ENCODE measurements at regions of chr1 and their contacts with region 1.

Region 1: GRCh38 chr1:230104395-230105244 is 37.6 kb downstream of the GALNT2 start:
- DNase-seq: peak; percentile 98 to 99
- H3K4me3 ChIP-seq: peak overlapping the region; percentile 45; the same call in 1 of the 2 replicates
- H3K27ac ChIP-seq: peak overlapping the region; percentile 98
- H3K4me1 ChIP-seq: peaks cover 58% of the 10 kb centered on the region
- H3K27me3 ChIP-seq: no peaks in the 10 kb centered on the region
- CTCF ChIP-seq: no peak

Region 2: DNA sequence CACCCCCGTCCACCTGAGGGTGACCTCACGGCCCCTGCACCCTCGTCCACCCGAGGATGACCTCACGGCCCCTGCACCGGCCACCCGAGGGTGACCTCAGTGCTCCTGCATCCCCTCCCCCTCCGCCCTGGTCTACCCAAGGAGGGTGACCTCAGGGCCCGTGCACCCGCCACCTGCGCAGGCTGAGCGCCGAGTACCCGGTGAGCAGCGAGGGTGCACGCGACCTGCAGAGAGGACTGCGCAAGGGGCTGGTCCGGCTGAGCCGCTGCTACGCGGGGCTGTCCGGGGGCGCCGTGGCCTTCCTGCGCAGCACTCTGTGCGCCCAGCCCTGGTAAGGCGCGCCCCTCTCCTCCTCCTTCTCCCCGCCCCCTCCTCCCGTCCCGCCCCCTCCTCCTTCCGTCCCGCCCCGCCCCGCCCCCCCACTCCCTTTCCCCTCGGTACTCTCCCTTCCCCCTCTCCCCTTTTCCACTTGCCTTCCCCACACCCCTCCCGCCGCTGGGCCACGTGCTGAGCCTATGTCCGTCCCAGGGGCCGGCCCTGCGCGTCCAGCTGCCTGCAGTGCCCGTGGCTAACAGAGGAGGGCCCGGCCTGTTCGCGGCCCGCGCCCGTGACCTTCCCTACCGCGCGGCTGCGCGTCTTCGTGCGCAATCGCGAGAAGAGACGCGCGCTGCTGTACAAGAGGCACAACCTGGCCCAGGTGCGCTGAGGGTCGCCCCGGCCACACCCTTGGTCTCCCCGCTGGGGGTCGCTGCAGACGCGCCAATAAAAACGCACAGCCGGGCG is 1726.3 kb before region 1 on chr1:
- CTCF ChIA-PET with region 1: no interaction called
- POLR2A ChIA-PET with region 1: no interaction called
- intact Hi-C with region 1: no loop called
- DNase-seq: peak; percentile 78 to 95
- H3K4me3 ChIP-seq: peak overlapping the region; percentile 67
- H3K27ac ChIP-seq: no peak overlapping the region
- H3K4me1 ChIP-seq: peaks cover 15% of the 10 kb centered on the region
- H3K27me3 ChIP-seq: no peaks in the 10 kb centered on the region
- CTCF ChIP-seq: peak; percentile 82

Region 3: DNA sequence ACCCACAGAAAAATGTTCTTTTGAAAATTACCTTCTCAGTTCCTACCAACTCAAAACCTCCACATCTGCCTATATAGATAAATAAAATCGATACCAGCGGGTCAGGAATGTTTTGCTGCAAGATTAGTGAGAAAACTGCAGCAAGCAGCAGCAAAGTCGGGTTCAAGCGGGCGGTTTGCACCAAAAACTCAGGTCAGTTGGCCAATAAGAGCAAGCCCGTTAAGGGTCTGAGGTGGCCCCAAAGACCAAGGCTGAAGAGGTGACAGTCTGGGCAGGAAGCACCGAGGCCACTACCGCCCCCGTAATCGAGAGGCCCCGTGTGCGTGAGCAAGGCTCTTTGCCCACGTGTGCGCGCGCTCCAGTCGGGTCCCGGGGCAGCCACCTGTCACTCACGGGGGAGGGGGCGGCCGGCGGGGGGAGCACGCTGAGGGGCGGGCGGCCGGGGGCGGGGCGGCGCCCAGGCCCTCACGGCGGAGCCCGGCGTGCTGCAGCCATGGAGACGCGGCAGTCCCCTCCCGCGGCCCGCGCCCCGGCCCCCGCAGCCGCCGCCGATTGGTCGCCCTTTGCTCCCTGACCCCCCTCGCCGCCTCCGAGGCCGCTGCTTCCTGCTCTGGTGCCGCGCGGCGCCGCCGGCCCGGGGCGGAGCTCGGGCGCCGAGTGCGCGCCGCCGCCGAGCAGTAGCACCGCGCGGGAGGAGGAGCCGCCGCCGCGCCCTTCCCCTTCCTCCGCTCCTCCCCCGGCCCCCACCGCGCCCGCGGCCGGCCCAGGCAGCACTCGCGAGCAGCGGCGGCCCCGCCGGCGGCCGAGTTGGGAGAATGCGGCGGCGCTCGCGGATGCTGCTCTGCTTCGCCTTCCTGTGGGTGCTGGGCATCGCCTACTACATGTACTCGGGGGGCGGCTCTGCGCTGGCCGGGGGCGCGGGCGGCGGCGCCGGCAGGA is 37.9 kb before region 1 on chr1 and contains the start of gene GALNT2:
- CTCF ChIA-PET with region 1: no interaction called
- POLR2A ChIA-PET with region 1: interaction called, 14 read pairs
- intact Hi-C with region 1: loop called (anchors 1 kb)
- DNase-seq: peak; percentile 63 to 92
- H3K4me3 ChIP-seq: peak within 1 kb of the TSS; percentile 93
- H3K27ac ChIP-seq: peak within 1 kb of the TSS; percentile 39
- H3K4me1 ChIP-seq: peaks cover 22% of the 10 kb centered on the region
- H3K27me3 ChIP-seq: no peaks in the 10 kb centered on the region
- CTCF ChIP-seq: no peak
- total RNA-seq, gene GALNT2: 104 and 121 TPM in 2 replicates

Region 4: DNA sequence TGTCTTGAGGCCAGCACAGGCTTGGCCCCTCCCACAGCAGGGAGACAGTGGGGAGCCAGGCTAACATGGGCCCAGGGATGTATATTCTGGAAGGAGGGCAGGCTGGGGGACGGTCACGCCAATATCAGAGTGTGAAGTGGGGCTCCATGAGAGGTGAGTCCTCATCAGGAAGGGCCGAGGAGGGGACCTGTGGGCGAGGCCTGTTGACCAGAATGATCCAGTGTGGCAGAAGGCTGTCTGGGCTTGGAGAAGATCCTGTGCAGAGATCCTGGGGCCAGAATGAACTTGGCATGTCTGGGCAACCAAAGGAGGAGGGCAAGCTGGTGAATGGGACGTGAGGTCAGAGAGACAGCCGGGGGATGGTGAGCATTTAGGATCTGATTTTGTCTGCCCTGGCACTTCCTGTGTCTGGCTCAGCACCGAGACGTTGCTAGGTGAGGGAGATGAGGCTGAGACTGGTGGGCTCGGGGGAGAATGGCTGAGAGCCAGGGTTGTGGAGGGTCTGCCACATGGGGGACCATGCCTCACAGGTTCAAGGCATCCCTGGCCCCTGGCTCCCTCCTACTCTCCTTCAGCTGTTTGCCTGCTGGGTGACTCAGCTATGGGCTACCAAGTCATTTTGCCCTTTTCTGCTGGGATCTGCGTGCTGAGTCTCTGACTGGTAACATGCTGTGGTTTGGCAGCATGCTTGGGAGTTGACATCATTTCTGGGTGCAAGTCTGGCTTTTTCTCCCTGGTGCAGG is 20.3 kb before region 1 on chr1:
- CTCF ChIA-PET with region 1: interaction called, 5 read pairs
- POLR2A ChIA-PET with region 1: interaction called, 7 read pairs
- intact Hi-C with region 1: loop called (anchors 1 kb)
- DNase-seq: peak; percentile 86 to 95
- H3K4me3 ChIP-seq: peak overlapping the region; percentile 4; the same call in 1 of the 2 replicates
- H3K27ac ChIP-seq: peak overlapping the region; percentile 85
- H3K4me1 ChIP-seq: peaks cover 48% of the 10 kb centered on the region
- H3K27me3 ChIP-seq: no peaks in the 10 kb centered on the region
- CTCF ChIP-seq: no peak

Region 5: DNA sequence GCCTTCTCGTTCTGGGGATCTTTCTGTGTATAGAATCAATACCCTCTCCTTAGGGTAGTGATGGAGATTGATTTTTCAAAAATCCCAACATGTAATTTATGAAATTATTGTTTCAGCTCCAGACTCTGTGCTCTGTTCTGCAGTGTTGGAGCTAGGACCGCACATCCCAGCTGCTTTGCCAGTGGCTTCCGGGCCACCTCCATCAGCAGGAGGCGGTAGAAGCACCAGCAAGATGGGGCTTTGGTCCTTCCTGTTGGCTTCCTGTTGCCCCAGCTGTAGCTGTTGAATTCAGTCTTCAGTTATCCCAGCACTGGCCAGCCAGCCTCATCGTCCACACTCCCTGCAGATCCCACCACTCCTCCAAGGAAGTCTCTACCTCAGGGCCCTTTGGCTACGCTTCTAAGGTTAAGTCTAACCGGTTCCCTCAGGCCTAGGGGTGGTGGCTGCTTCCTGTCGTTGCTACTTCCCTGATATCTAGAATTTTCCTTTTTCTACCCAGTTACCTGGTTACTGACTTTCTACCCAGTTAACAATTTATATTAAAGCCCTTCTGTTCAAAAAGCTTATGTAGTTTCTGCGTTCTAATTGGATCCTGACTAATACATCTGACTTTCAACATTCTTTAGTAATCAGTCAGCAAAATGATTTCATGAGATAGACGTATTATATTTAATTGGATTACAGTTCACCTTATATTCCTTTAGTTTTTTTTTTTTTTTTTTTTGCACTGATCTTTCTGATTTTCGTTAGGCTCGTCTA is 13.0 kb before region 1 on chr1:
- CTCF ChIA-PET with region 1: interaction called, 3 read pairs
- POLR2A ChIA-PET with region 1: interaction called, 3 read pairs
- intact Hi-C with region 1: loop called (anchors 1 kb)
- DNase-seq: peak; percentile 65 to 94
- H3K4me3 ChIP-seq: peak overlapping the region; percentile 27; the same call in 1 of the 2 replicates
- H3K27ac ChIP-seq: peak overlapping the region; percentile 94
- H3K4me1 ChIP-seq: peaks cover 55% of the 10 kb centered on the region
- H3K27me3 ChIP-seq: no peaks in the 10 kb centered on the region
- CTCF ChIP-seq: no peak

Region 6: DNA sequence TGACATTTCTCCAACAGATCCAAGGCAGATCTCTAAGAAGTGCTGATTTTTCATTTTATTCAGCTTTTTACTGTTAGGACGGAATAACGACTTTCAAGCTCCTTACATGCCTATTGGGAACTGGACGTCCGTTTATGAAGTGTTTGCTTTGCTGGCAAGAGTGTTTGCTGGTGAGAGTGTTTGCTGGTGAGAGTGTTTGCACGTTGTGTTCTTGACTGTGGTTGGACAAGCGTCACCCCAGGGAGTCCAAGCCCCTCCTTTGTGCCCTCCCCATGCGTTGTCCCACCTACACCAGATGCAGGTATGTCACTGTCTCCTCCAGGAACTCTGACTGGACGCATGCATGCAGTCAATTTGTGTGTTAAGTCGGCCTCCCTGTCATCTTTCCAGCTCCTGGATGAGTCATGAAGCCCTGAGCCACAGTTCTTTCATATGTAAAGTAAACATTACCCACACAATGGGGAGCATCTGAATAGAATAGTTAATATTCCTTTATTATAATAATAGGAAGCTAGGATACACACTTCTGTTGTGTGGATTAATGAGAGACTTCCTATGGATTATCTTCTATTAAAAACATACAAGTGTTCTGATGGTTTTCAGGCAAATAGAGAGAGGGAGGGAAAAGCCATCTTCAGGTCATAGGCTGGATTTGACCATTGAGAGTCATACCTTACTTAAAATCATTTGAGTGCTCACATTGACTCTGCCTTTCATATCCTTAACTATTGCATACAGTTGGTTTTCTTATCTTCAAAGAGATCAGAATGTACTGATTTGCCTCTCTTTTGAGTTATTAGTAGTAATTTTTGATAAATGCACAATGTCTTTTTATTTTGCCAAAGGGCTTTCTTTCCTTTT is 81.6 kb after region 1 on chr1:
- CTCF ChIA-PET with region 1: no interaction called
- POLR2A ChIA-PET with region 1: interaction called, 5 read pairs
- intact Hi-C with region 1: loop called (anchors 5 kb)
- DNase-seq: peak; percentile 70 to 72
- H3K4me3 ChIP-seq: no peak overlapping the region
- H3K27ac ChIP-seq: no peak overlapping the region
- H3K4me1 ChIP-seq: peaks cover 14% of the 10 kb centered on the region
- H3K27me3 ChIP-seq: no peaks in the 10 kb centered on the region
- CTCF ChIP-seq: no peak

Region 7: DNA sequence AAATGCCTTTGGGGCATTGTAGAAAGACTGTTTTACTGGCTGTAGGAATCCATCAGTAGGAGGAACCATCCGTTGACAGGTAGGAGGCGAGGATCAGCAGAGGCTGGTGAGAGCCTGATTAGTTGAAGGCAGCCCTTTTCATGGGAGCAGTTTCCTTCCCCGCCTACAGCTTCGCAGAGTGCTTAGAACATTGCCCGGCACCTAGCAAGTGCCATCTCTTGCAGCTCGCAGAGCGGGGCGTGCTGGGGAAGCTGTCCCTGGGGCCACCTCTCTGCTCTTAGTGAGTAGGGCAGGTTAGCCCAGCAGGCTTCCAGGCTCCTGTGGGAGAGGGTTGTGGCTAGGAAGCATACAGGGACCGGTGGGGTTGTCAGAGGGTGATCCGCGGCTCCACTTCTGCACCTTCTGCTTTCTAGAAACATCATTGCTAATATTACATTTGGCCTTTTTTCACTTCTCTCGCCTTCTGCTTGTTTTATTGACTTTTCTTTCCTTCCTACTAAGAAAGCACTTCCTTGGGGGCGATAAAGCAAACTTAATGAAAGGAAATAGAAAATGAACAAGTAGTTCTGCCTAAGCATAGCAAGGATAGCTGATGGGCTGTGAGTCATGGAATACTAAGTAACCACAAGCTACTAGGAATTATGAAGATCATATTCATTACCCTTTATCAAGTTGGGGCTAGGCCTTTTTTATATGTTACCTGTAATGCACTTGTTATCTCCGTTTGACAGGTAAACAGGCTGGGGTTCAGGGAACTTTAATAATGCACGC is 139.1 kb after region 1 on chr1:
- CTCF ChIA-PET with region 1: no interaction called
- POLR2A ChIA-PET with region 1: no interaction called
- intact Hi-C with region 1: no loop called
- DNase-seq: no peak
- H3K4me3 ChIP-seq: no peak overlapping the region
- H3K27ac ChIP-seq: no peak overlapping the region
- H3K4me1 ChIP-seq: no peaks in the 10 kb centered on the region
- H3K27me3 ChIP-seq: no peaks in the 10 kb centered on the region
- CTCF ChIP-seq: no peak

Region 8: GRCh38 chr1:230268366-230269170 is 163.9 kb after region 1 on chr1:
- CTCF ChIA-PET with region 1: no interaction called
- POLR2A ChIA-PET with region 1: no interaction called
- intact Hi-C with region 1: loop called (anchors 10 kb)
- DNase-seq: peak; percentile 48 to 50
- H3K4me3 ChIP-seq: no peak overlapping the region
- H3K27ac ChIP-seq: no peak overlapping the region
- H3K4me1 ChIP-seq: no peaks in the 10 kb centered on the region
- H3K27me3 ChIP-seq: no peaks in the 10 kb centered on the region
- CTCF ChIP-seq: peak; percentile 75

Measured in PC-9 (cell line).